Activated naive CD4-positive, alpha-beta T cell treated with anti-CD3 and anti-CD28 coated beads, Interleukin-2, amount 10 ng/mL, durations not matched to agents 7 days and 5 days (primary cell): ENCODE measurements at regions of chr6 and their contacts with region 1.

Region 1: DNA sequence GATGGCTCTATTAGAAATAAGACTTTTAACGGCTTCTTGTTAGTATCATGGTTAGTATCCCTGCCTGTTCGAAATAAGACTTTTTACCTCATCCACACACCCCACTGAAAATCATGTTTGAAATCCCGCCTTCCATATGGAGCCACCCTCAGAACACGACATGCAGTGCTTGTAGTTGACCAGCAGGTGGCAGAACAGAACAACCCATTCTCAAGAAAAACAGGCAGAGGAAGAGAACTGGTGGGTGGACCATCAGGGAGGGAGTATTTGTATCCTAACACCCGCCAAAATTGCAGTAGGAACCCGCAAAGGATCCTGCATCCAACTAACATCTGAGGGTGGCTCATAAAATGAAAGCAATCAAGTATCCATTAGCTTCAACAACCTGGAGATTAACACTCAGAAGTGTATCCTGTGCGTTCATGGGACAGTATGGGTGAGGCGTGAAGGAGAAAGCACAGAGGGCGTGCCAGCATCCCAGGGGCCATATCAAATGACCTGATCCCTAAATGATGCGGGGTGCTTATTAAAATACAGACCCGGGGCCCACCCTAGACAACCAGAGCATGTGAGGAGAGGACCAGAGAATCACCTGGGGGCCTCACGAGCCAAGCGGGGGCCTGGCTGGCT is 89.6 kb upstream of the NHSL1 start:
- DNase-seq: peak; percentile 63
- H3K4me3 Mint-ChIP-seq: no peak overlapping the region
- H3K27ac Mint-ChIP-seq: no peak overlapping the region
- H3K4me1 Mint-ChIP-seq: peaks cover 43% of the 10 kb centered on the region
- H3K27me3 Mint-ChIP-seq: peaks cover 7% of the 10 kb centered on the region

Region 2: GRCh38 chr6:138550346-138550767 is 38.6 kb before region 1 on chr6:
- CTCF ChIA-PET with region 1: no interaction called
- DNase-seq: no peak
- H3K4me3 Mint-ChIP-seq: no peak overlapping the region
- H3K27ac Mint-ChIP-seq: no peak overlapping the region
- H3K4me1 Mint-ChIP-seq: peaks cover 12% of the 10 kb centered on the region
- H3K27me3 Mint-ChIP-seq: peaks cover 27% of the 10 kb centered on the region

Region 3: GRCh38 chr6:138654715-138655634 is 66.1 kb after region 1 on chr6:
- CTCF ChIA-PET with region 1: interaction called, 12 read pairs
- DNase-seq: no peak
- H3K4me3 Mint-ChIP-seq: no peak overlapping the region
- H3K27ac Mint-ChIP-seq: no peak overlapping the region
- H3K4me1 Mint-ChIP-seq: peaks cover 12% of the 10 kb centered on the region
- H3K27me3 Mint-ChIP-seq: peaks cover 10% of the 10 kb centered on the region

Region 4: GRCh38 chr6:138692058-138692977 is 103.4 kb after region 1 on chr6:
- CTCF ChIA-PET with region 1: interaction called, 19 read pairs
- DNase-seq: peak; percentile 67
- H3K4me3 Mint-ChIP-seq: peak overlapping the region; percentile 74
- H3K27ac Mint-ChIP-seq: no peak overlapping the region
- H3K4me1 Mint-ChIP-seq: peaks cover 11% of the 10 kb centered on the region
- H3K27me3 Mint-ChIP-seq: peaks cover 60% of the 10 kb centered on the region

Region 5: DNA sequence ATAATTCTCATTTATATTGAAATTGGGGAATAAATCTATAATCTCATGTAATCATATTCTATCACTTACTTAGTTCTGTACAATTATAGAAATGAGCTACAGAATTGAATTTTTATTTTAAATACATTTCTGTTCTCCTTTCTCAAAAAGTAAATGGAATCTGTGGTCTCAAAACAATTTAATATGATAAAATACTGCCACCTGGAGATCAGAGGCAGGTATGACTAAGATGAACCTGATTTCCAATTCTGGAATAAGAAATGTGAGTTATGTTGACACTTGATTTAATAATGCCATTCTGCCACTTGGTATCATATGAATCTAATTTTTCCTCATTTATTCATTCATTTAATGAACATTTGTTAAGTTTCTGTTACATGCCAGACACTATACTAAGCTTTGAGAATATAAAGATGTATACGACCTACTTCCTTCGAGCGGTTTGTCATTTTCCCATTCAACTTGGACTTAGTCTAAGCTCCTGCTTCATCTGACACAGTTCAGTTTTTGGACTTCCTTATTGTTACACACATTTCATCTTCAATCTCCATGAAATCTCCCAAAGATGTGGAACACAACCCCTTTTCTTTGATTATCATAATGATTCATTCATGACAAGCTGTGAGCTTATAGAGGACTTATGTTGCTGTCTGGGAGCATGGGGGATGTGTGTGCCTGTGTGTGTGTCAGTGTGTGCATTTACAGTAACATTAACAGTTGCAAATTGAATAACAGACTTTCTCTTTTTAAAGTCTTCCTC is 177.2 kb after region 1 on chr6:
- CTCF ChIA-PET with region 1: interaction called, 96 read pairs
- DNase-seq: no peak
- H3K4me3 Mint-ChIP-seq: no peak overlapping the region
- H3K27ac Mint-ChIP-seq: no peak overlapping the region
- H3K4me1 Mint-ChIP-seq: peaks cover 4% of the 10 kb centered on the region
- H3K27me3 Mint-ChIP-seq: no peaks in the 10 kb centered on the region

Region 6: GRCh38 chr6:138772596-138773176 is 183.8 kb after region 1 on chr6:
- CTCF ChIA-PET with region 1: interaction called, 11 read pairs
- DNase-seq: no peak
- H3K4me3 Mint-ChIP-seq: peak overlapping the region; percentile 95
- H3K27ac Mint-ChIP-seq: peak overlapping the region; percentile 100
- H3K4me1 Mint-ChIP-seq: peaks cover 30% of the 10 kb centered on the region
- H3K27me3 Mint-ChIP-seq: no peaks in the 10 kb centered on the region